Activated B cell treated with CpG ODN at 0.5 μM for 24 hours (primary cell): ENCODE measurements at regions of chr5 and their contacts with region 1.

Region 1: GRCh38 chr5:40428126-40428525 is 251.6 kb upstream of the PTGER4 start:
- DNase-seq: no peak
- ATAC-seq: peak; percentile 98
- H3K4me3 Mint-ChIP-seq: no peak overlapping the region
- H3K27ac Mint-ChIP-seq: no peak overlapping the region
- H3K4me1 Mint-ChIP-seq: peaks cover 17% of the 10 kb centered on the region
- H3K27me3 Mint-ChIP-seq: no peaks in the 10 kb centered on the region
- CTCF ChIP-seq: no peak

Region 2: GRCh38 chr5:39399135-39400036 is 1028.7 kb before region 1 on chr5:
- CTCF ChIA-PET with region 1: no interaction called
- POLR2A ChIA-PET with region 1: no interaction called
- intact Hi-C with region 1: no loop called
- DNase-seq: no peak
- ATAC-seq: no peak
- H3K4me3 Mint-ChIP-seq: no peak overlapping the region
- H3K27ac Mint-ChIP-seq: no peak overlapping the region
- H3K4me1 Mint-ChIP-seq: peaks cover 8% of the 10 kb centered on the region
- H3K27me3 Mint-ChIP-seq: no peaks in the 10 kb centered on the region
- CTCF ChIP-seq: no peak

Region 3: DNA sequence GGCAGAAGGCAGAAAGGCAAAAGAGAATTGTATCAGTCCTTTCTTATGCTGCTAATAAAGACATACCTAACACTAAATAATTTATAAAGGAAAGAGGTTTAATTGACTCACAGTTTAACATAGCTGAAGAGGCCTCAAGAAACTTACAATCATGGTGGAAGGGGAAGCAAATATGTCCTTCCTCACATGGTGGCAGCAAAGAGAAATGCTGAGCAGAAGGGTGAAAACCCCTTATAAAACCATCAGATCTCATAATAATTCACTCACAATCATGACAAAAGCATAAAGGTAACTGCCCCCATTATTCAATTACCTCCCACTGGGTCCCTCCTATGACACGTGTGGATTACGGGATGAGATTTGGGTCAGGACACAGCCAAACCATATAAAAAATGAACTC is 60.9 kb before region 1 on chr5:
- CTCF ChIA-PET with region 1: no interaction called
- POLR2A ChIA-PET with region 1: no interaction called
- intact Hi-C with region 1: loop called (anchors 2 kb)
- DNase-seq: no peak
- ATAC-seq: peak; percentile 45
- H3K4me3 Mint-ChIP-seq: no peak overlapping the region
- H3K27ac Mint-ChIP-seq: no peak overlapping the region
- H3K4me1 Mint-ChIP-seq: peaks cover 13% of the 10 kb centered on the region
- H3K27me3 Mint-ChIP-seq: no peaks in the 10 kb centered on the region
- CTCF ChIP-seq: no peak

Region 4: GRCh38 chr5:40410231-40410861 is 17.8 kb before region 1 on chr5:
- CTCF ChIA-PET with region 1: no interaction called
- POLR2A ChIA-PET with region 1: interaction called, 3 read pairs
- intact Hi-C with region 1: loop called (anchors 2 kb)
- DNase-seq: no peak
- ATAC-seq: peak; percentile 69
- H3K4me3 Mint-ChIP-seq: peak overlapping the region; percentile 51
- H3K27ac Mint-ChIP-seq: peak overlapping the region; percentile 78
- H3K4me1 Mint-ChIP-seq: peaks cover 44% of the 10 kb centered on the region
- H3K27me3 Mint-ChIP-seq: no peaks in the 10 kb centered on the region
- CTCF ChIP-seq: no peak